ENCODE measurements at regions of chr6 and their contacts with region 1.

Region 1: DNA sequence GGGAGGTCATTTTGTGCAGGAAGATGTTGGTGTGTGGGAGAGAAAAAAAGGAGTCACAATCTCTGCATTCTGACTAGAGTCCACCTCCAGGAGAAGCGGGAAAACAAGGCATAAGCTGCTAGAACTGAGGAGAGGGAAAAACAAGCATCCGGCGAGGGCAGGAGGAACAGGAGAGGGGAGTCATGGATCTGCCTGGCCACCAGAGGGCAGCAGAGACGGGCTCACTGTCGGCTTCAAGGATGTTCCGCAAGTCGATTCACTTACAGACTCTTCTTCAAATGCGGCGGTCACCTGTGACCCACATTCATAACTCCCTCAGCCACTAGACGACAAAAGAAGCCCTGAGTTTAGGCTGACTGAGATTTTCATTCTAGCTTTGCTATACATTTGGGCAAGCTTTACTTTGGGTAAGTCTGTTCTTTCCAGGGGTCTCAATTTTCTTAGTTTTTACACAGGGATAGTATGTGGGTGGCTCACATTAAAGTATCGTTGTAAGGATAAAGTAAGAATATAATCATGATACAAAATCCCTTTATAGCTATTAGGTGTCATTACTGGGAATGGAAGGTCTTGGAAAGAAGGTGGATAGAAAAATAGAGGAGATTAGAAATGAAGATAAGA is 6.6 kb upstream of the BTNL2 start:
- DNase-seq: peak; percentile 3
- H3K4me3 ChIP-seq: no peak overlapping the region
- H3K27me3 ChIP-seq: peaks cover 3% of the 10 kb centered on the region
- CTCF ChIP-seq: peak; percentile 93

Region 2: GRCh38 chr6:32244946-32245398 is 168.6 kb before region 1 on chr6:
- CTCF ChIA-PET with region 1: interaction called, 10 read pairs
- POLR2A ChIA-PET with region 1: no interaction called
- DNase-seq: peak; percentile 37
- H3K4me3 ChIP-seq: no peak overlapping the region
- H3K27me3 ChIP-seq: peaks cover 3% of the 10 kb centered on the region
- CTCF ChIP-seq: peak; percentile 94

Region 3: GRCh38 chr6:32402812-32403211 is 10.7 kb before region 1 on chr6:
- CTCF ChIA-PET with region 1: interaction called, 53 read pairs
- POLR2A ChIA-PET with region 1: no interaction called
- DNase-seq: no peak
- H3K4me3 ChIP-seq: no peak overlapping the region
- H3K27me3 ChIP-seq: peaks cover 6% of the 10 kb centered on the region; the same call in 1 of the 2 replicates
- CTCF ChIP-seq: no peak

Region 4: GRCh38 chr6:32477808-32478207 is 64.3 kb after region 1 on chr6:
- CTCF ChIA-PET with region 1: no interaction called
- POLR2A ChIA-PET with region 1: no interaction called
- DNase-seq: no peak
- H3K4me3 ChIP-seq: no peak overlapping the region
- H3K27me3 ChIP-seq: no peaks in the 10 kb centered on the region
- CTCF ChIP-seq: no peak

Region 5: GRCh38 chr6:32700391-32701040 is 287.0 kb after region 1 on chr6:
- CTCF ChIA-PET with region 1: interaction called, 46 read pairs
- POLR2A ChIA-PET with region 1: no interaction called
- DNase-seq: no peak
- H3K4me3 ChIP-seq: no peak overlapping the region
- H3K27me3 ChIP-seq: no peaks in the 10 kb centered on the region
- CTCF ChIP-seq: peak; percentile 73

Region 6: DNA sequence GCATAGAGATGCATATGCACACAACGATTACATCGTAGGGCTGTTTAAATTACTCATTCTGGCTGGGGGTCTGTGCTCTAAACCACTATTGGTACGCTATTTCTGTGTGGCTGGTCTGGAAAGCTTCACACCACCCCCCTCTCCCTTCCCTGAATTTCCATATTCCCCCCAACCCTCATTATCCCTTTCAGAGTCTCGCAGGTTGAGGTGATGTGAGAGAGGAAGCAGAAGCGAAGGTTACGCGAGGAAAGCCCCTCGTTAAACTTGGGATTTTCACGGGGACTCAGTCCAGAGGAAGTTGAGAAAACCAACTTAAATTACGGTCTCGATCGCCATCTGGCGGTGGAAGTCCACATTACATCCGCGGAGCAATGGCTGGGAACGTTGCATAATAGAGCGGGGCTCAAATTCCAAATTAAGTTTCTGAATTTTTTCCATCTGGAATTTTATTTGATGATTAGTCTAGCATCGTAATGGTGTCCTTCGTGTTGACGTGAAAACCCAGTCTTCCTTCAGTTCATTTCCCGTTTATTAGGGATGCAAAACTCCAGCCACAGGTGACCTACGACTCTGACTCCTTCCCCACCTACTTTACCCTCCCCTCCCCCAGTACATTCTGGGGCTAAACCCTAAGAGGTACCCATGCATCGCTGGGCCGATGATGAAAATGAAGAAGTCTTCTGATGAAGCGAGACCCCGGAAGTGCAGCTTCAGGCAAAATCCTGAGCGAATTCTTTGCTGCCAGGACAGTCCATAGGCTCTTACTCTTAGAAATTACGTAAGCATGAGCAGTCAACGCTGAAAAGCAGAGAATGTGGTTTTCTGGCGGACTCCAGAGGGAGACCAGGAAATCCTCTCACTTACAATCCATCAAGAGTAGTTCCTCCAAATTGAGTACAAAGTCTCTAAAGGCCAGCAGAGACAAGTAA is 383.6 kb after region 1 on chr6:
- CTCF ChIA-PET with region 1: interaction called, 10 read pairs
- POLR2A ChIA-PET with region 1: no interaction called
- DNase-seq: no peak
- H3K4me3 ChIP-seq: peak overlapping the region; percentile 5; the same call in 1 of the 2 replicates
- H3K27me3 ChIP-seq: peaks cover 9% of the 10 kb centered on the region
- CTCF ChIP-seq: peak; percentile 78